ENCODE measurements at regions of chr14 and their contacts with region 1.

Region 1: DNA sequence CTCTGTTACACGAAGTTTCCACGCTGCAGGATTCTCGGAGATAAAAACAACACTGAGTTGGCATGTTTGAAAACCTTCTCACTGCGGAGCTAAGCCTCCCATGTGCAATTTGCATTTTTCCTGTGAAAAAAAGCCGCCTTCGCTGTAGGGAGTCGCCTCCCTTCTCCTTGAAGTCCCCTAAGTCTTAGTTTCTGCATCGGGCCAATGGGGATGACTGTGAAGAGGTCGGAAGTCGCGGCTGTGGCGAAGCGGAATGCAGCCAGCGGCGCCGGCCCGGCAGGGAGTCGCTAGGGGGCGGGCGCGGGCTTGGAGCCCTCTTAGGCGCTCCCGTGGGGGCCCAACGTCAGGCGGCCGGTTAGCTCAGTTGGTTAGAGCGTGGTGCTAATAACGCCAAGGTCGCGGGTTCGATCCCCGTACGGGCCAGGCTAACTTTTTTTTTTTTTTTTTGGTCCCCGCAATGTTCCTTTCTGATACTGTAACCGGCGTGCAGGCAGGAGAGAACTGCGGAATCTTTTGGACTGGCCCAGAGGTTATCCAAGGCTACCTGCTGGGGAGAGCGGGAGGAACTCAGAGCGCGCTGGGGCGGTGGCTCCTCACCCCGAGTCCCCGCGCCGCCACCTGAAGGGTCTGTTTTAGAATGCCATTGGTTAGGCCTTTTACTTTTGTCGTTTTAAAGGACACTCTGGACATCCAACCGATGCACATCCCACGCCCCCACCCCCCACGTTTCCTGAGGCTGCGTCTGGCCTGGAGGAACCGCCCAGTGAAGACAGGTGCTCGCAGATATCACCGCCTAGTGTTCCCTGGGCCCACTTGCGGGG is 2.6 kb upstream of the ZNF839 start:
- DNase-seq: peak; percentile 91
- ATAC-seq: peak; percentile 71
- H3K4me3 ChIP-seq: peak overlapping the region; percentile 54
- H3K27ac ChIP-seq: peak overlapping the region; percentile 49
- H3K4me1 ChIP-seq: peaks cover 15% of the 10 kb centered on the region
- H3K27me3 ChIP-seq: no peaks in the 10 kb centered on the region
- CTCF ChIP-seq: peak; percentile 83
- POLR2A ChIP-seq: no peak
- RAD21 ChIP-seq: no peak

Region 2: DNA sequence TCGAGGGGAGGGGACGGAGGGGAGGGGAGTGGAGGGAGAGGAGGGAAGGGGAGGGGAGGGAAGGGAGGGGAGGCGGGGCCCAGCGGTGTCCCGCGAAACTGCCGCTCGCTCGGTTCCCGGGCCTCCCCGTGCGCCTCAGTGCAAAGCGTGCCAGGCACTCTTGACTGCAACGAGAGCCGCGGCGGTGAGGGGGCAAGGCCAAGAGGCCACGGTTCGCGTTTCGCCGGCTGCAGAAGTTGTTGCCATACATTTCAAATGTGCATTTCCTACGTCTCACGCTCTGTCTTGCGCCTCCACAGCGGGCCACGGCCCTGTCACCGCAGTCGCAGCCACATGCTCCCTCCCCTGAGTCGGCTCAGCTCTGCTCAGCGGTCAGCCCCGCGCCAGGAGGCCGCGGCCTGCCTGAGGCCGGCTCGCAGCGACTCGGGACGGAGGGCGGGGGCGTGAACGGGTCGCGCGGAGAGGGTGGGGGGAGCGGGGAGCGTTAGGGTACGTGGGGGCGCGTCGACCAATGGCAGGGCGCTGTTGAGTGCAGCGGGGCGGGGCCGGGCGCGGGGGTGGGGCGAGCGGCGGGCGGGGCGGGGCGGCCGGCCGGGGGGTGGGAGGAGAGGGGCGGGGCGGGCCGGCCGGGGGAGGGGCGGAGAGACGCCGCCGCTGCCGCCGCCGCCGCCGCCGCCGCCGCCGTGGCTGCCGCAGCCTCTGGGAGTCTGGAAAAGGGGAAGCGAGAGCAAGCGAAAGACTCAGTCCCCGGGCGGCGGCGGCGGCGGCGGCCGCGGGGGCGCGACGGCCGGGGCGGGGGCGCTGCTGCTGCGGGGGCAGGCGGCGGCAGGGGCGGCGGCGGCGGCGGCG is 555.7 kb before region 1 on chr14 and contains the start of gene PPP2R5C:
- CTCF ChIA-PET with region 1: no interaction called
- POLR2A ChIA-PET with region 1: no interaction called
- dilution Hi-C with region 1: no loop called
- in situ Hi-C with region 1: loop called (anchors 25 kb)
- intact Hi-C with region 1: no loop called
- DNase-seq: peak; percentile 82
- ATAC-seq: peak; percentile 78
- H3K4me3 ChIP-seq: peak within 1 kb of the TSS; percentile 99
- H3K27ac ChIP-seq: peak within 1 kb of the TSS; percentile 65
- H3K4me1 ChIP-seq: no peaks in the 10 kb centered on the region
- H3K27me3 ChIP-seq: peaks cover 16% of the 10 kb centered on the region
- CTCF ChIP-seq: no peak
- POLR2A ChIP-seq: 0 out of 2 replicates have a peak, but pooled peaks have one; percentile 32
- RAD21 ChIP-seq: no peak
- total RNA-seq, gene PPP2R5C: 78.7 and 107 TPM in 2 replicates

Region 3: DNA sequence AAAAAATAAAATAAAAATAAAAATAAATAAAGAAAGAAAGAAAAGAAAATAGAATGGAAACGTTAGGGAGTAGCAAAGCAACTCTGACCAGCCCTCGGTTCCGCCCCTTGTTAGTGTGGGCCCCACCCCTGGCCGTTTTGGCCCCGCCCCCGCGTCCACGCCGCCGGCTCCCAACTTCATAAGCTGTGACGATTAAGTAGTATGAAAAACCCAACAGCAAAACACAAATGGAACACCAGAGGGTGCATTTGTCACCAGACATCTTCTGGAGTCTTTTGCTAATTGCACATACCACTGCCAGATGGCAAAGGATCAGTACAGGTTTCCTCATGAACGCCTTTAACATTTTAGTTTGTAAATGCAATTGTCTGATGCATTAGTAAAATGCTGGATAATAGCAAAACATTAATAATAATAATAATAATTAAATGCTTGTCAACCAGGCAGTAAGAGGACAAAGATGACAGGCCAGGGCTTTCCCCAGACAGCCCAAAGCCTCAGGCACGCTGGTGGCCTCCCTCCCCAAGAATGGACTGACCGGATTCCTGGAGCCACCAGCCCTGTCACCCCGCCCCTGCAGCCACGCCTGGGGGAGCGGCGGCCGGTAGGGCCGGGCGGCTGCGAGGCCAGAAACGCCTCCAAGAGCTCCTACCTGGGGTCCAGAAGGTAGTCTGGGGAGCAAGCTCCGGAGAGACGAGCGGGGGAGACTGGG is 253.7 kb before region 1 on chr14:
- CTCF ChIA-PET with region 1: no interaction called
- POLR2A ChIA-PET with region 1: no interaction called
- dilution Hi-C with region 1: no loop called
- in situ Hi-C with region 1: no loop called
- intact Hi-C with region 1: loop called (anchors 1 kb)
- DNase-seq: peak; percentile 83
- ATAC-seq: peak; percentile 98
- H3K4me3 ChIP-seq: no peak overlapping the region
- H3K27ac ChIP-seq: no peak overlapping the region
- H3K4me1 ChIP-seq: no peaks in the 10 kb centered on the region
- H3K27me3 ChIP-seq: no peaks in the 10 kb centered on the region
- CTCF ChIP-seq: peak; percentile 57
- POLR2A ChIP-seq: no peak
- RAD21 ChIP-seq: peak; percentile 61

Region 4: DNA sequence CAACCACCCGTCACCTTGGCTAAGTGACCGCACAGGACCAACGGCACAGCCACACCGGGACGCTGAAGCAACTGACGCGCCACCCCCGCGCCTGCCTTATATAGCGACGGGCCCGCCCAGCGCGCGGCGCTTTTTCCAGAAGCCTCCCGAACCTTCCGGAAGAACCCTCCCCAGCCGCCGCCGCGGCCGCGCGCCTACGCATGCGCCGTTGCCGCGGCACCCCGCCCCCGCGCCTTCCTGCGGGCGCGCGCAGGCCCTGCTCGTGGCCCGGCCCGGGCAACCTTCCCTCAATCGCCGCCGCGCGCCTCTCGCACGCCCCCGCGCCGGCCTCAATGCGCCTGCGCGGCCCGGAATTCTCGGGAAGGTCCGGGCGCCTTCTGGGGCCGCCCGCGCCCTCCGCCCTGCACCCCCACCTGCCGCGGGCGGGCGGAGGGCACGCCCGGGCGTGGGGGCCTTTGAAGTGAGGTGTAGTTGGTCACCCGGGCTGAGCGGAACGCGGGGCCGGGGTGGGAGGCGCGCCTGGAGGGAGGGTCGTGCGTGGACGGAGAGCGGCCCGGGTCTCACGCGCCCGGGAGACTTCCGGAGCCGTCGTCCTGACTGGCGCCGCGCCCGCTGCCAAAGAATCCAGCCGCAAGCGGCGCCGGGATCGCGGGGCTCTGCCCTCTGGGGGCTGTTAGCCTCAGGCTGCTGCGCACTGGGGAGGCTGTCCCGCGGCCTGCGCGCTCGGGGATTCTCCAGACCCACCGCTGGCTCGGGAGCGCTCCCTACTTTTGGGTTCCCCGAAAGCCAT is 229.8 kb before region 1 on chr14 and contains the start of gene HSP90AA1:
- CTCF ChIA-PET with region 1: interaction called, 3 read pairs
- POLR2A ChIA-PET with region 1: no interaction called
- dilution Hi-C with region 1: no loop called
- in situ Hi-C with region 1: loop called (anchors 25 kb)
- intact Hi-C with region 1: loop called (anchors 1 kb)
- DNase-seq: peak; percentile 88
- ATAC-seq: peak; percentile 87
- H3K4me3 ChIP-seq: peak within 1 kb of the TSS; percentile 87
- H3K27ac ChIP-seq: peak within 1 kb of the TSS; percentile 96
- H3K4me1 ChIP-seq: peaks cover 10% of the 10 kb centered on the region
- H3K27me3 ChIP-seq: no peaks in the 10 kb centered on the region
- CTCF ChIP-seq: 0 out of 2 replicates have a peak, but pooled peaks have one; percentile 14
- POLR2A ChIP-seq: peak; percentile 99
- RAD21 ChIP-seq: 0 out of 2 replicates have a peak, but pooled peaks have one; percentile 5
- total RNA-seq, gene HSP90AA1: 578 and 1,483 TPM in 2 replicates

Region 5: GRCh38 chr14:102139248-102140026 is 177.5 kb before region 1 on chr14 and contains the start of gene WDR20:
- CTCF ChIA-PET with region 1: no interaction called
- POLR2A ChIA-PET with region 1: interaction called, 6 read pairs
- dilution Hi-C with region 1: no loop called
- in situ Hi-C with region 1: loop called (anchors 10 kb)
- intact Hi-C with region 1: loop called (anchors 2 kb)
- DNase-seq: peak; percentile 92
- ATAC-seq: peak; percentile 98
- H3K4me3 ChIP-seq: peak within 1 kb of the TSS; percentile 67
- H3K27ac ChIP-seq: peak within 1 kb of the TSS; percentile 82
- H3K4me1 ChIP-seq: no peaks in the 10 kb centered on the region
- H3K27me3 ChIP-seq: no peaks in the 10 kb centered on the region
- CTCF ChIP-seq: no peak
- POLR2A ChIP-seq: peak; percentile 83
- RAD21 ChIP-seq: no peak
- total RNA-seq, gene WDR20: 27.4 and 28.1 TPM in 2 replicates

Region 6: GRCh38 chr14:102235275-102235897 is 81.6 kb before region 1 on chr14:
- CTCF ChIA-PET with region 1: interaction called, 3 read pairs
- POLR2A ChIA-PET with region 1: no interaction called
- dilution Hi-C with region 1: no loop called
- in situ Hi-C with region 1: loop called (anchors 5 kb)
- intact Hi-C with region 1: loop called (anchors 1 kb)
- DNase-seq: peak; percentile 89
- ATAC-seq: peak; percentile 94
- H3K4me3 ChIP-seq: no peak overlapping the region
- H3K27ac ChIP-seq: no peak overlapping the region; the same call in 1 of the 2 replicates
- H3K4me1 ChIP-seq: peaks cover 4% of the 10 kb centered on the region
- H3K27me3 ChIP-seq: no peaks in the 10 kb centered on the region
- CTCF ChIP-seq: peak; percentile 84
- POLR2A ChIP-seq: no peak
- RAD21 ChIP-seq: peak; percentile 86